Dendritic cell treated with granulocyte-macrophage colony-stimulating factor and Interleukin-4, amounts not matched to agents 40 ng/mL and 50 ng/mL, for 4 days (primary cell): ENCODE measurements at regions of chr16 and their contacts with region 1.

Region 1: GRCh38 chr16:15888072-15888976 is at the start of gene CEP20:
- H3K4me3 Mint-ChIP-seq: peak within 1 kb of the TSS; percentile 98
- H3K27ac Mint-ChIP-seq: peak within 1 kb of the TSS; percentile 94
- H3K4me1 Mint-ChIP-seq: peaks cover 22% of the 10 kb centered on the region
- H3K27me3 Mint-ChIP-seq: no peaks in the 10 kb centered on the region

Region 2: DNA sequence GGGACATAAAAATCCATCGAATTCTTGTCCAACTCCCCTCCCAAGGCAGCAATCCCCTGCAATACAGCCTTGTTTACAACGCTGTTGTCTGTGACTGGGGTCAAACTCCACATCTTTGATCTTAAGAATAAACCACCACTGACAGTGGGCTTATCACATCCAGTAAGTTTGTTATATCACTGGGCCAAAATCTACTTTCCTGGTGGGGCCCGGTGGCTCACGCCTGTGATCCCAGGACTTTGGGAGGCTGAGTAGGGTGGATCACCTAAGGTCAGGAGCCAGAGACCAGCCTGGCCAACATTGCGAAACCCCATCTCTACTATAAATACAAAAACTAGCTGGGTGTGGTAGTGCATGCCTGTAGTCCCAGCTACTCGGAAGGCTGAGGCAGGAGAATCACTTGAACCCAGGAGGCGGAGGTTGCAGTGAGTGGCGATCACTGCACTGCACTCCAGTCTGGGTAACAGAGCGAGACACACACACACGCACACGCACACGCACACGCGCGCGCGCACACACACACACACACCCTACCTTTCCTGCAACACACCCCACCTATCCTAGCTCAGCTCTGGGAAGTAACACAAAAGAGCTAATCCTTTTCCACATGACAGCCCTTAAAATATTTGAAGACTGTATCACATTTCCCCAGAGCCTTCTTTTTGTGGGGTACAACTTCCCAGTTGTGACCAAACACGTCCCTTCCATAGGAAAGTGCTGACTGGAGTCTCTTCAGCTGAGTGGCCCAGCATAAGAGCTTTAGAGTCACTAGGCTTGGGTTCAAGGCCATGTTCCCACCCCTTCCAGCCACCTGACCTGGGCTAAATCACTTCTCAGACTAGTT is 40.2 kb after region 1 on chr16:
- intact Hi-C with region 1: no loop called
- H3K4me3 Mint-ChIP-seq: no peak overlapping the region
- H3K27ac Mint-ChIP-seq: no peak overlapping the region
- H3K4me1 Mint-ChIP-seq: peaks cover 16% of the 10 kb centered on the region
- H3K27me3 Mint-ChIP-seq: no peaks in the 10 kb centered on the region

Region 3: GRCh38 chr16:16021988-16022682 is 133.8 kb after region 1 on chr16:
- intact Hi-C with region 1: loop called (anchors 10 kb)
- H3K4me3 Mint-ChIP-seq: no peak overlapping the region
- H3K27ac Mint-ChIP-seq: no peak overlapping the region
- H3K4me1 Mint-ChIP-seq: peaks cover 50% of the 10 kb centered on the region
- H3K27me3 Mint-ChIP-seq: no peaks in the 10 kb centered on the region